ENCODE measurements at regions of chr11 and their contacts with region 1.

Region 1: GRCh38 chr11:122655527-122656072 is at the start of gene UBASH3B:
- DNase-seq: no peak
- H3K4me3 ChIP-seq: peak within 1 kb of the TSS; percentile 84
- H3K27ac ChIP-seq: peak within 1 kb of the TSS; percentile 89
- H3K27me3 ChIP-seq: no peaks in the 10 kb centered on the region
- CTCF ChIP-seq: no peak
- polyA plus RNA-seq, gene UBASH3B: 19.1 and 25.0 TPM in 2 replicates

Region 2: DNA sequence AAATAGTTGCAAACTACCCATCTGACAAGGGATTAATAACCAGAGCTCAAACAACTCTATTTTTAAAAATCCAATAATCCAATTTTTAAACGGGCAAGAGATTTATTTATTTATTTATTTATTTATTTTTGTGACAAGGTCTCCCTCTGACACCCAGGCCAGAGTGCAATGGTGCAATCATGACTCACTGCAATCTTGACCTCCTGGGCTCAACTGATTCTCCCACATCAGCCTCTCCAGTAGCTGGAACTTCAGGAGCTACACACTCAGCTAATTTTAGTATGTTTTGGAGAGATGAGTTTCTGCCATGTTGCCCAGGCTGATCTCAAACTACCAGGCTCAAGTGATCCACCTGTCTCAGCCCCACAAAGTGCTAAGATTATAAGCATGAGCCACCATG is 272.4 kb before region 1 on chr11:
- CTCF ChIA-PET with region 1: no interaction called
- POLR2A ChIA-PET with region 1: no interaction called
- DNase-seq: no peak
- H3K4me3 ChIP-seq: no peak overlapping the region
- H3K27ac ChIP-seq: no peak overlapping the region
- H3K27me3 ChIP-seq: no peaks in the 10 kb centered on the region
- CTCF ChIP-seq: no peak

Region 3: DNA sequence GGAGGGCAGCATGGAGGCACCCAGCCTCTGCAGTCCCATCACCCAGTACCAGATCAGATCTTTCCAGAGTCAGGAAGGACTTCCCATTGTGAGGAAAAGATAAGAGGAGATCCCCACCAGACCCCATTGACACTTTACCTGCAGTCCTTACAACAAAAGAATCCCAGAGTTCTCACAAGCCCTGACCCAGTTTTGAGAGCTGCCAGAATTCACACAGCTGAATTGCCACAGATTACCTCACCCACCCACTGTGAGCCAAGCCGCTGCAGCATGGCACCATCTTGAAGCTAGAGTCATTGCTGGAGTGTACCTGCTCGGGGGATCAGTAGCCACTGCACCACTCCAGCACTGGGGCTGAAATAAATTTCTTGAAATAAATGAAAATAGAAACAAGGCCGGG is 91.8 kb before region 1 on chr11:
- CTCF ChIA-PET with region 1: no interaction called
- POLR2A ChIA-PET with region 1: no interaction called
- DNase-seq: no peak
- H3K4me3 ChIP-seq: no peak overlapping the region
- H3K27ac ChIP-seq: no peak overlapping the region
- H3K27me3 ChIP-seq: peaks cover 4% of the 10 kb centered on the region
- CTCF ChIP-seq: no peak

Region 4: DNA sequence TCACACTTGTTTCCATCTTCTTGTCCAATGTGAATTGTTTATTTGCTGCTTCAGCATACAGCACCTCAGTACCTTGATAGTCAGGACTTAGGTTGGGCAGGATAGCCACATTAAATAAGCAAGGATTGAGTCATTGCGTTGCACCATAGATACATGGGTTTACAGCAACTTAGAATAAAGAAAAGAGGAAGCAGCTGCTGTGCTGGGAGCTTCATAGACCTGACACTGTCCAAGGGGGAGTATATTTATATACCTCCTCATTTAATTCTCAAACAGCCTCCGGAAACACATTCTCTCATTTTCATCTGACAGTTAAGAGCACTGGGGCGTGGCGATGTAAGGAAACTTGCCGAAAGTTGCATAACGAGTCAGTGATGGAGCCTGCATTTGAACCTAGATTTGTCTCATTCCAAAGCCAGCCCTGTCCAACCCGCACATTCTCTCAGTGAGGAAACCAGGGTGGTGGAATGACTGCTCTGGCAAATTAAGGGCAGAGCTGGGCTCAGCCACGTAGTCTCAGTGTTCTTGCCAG is 42.1 kb after region 1 on chr11:
- CTCF ChIA-PET with region 1: no interaction called
- POLR2A ChIA-PET with region 1: no interaction called
- DNase-seq: no peak
- H3K4me3 ChIP-seq: no peak overlapping the region
- H3K27ac ChIP-seq: peak overlapping the region; percentile 61
- H3K27me3 ChIP-seq: no peaks in the 10 kb centered on the region
- CTCF ChIP-seq: no peak

Region 5: DNA sequence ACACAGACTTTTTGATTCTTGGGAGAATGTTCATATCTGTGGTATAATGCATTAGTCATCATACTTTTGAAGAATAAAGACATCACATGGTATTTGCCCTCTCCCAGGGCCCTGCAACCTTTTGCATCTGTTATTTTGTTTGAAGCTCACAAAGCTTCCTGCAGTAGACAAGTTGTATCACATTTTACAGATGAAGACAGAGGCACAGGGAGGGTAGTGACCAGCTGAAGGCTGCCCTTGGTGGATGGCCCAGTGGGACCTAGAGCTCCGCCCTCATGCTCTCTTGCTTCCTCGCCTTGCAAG is 66.3 kb after region 1 on chr11:
- CTCF ChIA-PET with region 1: no interaction called
- POLR2A ChIA-PET with region 1: interaction called, 13 read pairs
- DNase-seq: peak; percentile 64
- H3K4me3 ChIP-seq: no peak overlapping the region
- H3K27ac ChIP-seq: peak overlapping the region; percentile 83
- H3K27me3 ChIP-seq: no peaks in the 10 kb centered on the region
- CTCF ChIP-seq: no peak

Region 6: GRCh38 chr11:122749005-122749687 is 93.5 kb after region 1 on chr11:
- CTCF ChIA-PET with region 1: no interaction called
- POLR2A ChIA-PET with region 1: interaction called, 11 read pairs
- DNase-seq: peak; percentile 63
- H3K4me3 ChIP-seq: no peak overlapping the region; the same call in 1 of the 2 replicates
- H3K27ac ChIP-seq: peak overlapping the region; percentile 73
- H3K27me3 ChIP-seq: no peaks in the 10 kb centered on the region
- CTCF ChIP-seq: no peak

Measured in AG04450 (cell line).